ENCODE measurements at regions of chr1 and their contacts with region 1.

Region 1: GRCh38 chr1:245156081-245156735 is 1.4 kb downstream of the KIF26B start:
- DNase-seq: no peak
- H3K4me3 ChIP-seq: peak overlapping the region; percentile 68
- CTCF ChIP-seq: peak; percentile 93

Region 2: DNA sequence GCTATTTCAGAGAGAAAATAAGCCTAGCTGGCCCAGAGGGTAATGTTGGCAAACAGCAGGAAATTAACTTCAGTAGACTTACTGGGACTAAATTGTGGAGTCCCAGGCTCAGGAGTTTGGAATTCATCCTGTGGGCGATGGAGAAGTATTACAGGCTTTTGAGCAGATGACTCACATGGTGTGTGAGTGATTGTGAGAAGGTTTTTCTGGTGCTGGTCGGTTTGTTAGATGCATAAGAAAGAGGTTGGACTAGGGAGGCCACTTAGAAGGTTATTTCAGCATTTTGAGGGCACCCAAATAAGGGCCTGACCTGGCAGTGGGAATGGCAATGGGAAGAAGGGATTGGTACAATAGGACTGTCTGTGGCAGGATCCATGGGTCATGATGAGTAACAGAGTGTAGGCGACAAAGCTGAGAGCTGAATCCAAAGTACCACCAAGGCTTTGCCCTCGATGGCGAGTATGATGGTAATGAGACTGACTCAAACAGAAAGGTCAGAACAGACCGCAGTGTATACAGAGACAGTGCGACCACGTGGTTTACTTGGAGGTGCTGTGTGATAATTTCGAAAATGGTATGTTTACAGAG is 70.6 kb before region 1 on chr1:
- CTCF ChIA-PET with region 1: interaction called, 12 read pairs
- POLR2A ChIA-PET with region 1: no interaction called
- DNase-seq: peak; percentile 92
- H3K4me3 ChIP-seq: no peak overlapping the region
- CTCF ChIP-seq: peak; percentile 17

Region 3: GRCh38 chr1:245142171-245142798 is 13.9 kb before region 1 on chr1:
- CTCF ChIA-PET with region 1: interaction called, 14 read pairs
- POLR2A ChIA-PET with region 1: no interaction called
- DNase-seq: no peak
- H3K4me3 ChIP-seq: no peak overlapping the region
- CTCF ChIP-seq: no peak

Region 4: DNA sequence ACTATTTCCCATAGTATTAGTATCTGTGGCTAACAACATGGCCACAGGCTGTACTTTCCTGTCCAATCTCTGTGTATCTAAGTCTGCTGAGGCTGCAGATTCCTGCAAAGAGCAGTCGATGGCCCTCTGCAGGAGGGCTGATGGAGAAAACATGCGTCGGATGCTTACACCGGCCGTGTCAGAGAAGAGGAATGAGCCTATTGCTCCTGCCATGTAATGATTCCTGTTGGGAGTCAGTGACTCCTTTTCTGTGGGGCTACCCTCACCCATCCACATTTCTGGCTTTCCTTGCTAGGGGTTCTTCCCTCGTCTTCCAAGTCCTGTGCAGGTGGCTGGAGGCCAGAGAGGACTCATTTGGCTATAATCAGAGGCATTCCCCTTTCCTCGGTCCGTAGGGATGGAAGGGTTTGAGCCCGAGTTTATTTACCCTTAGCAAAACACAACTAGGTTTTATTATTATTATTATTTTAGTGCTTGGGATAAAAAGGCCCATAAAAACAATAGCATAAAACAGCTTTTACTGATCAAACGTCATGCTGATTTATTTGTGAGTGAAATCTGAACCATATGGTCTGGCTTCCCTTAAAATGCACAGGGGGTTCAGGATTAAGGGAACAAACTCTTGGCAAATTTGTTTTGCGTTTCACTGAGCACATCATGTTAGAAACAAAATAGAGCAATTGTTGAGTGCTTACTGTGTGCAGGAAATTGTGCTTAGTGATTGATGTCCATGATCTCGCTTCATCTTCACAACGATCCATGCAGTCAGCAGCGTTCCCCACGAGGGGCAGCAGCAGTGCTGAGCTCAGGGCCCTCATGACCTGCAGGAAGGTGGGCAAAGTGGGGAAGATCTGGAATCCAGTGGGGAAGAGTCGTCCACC is 69.4 kb after region 1 on chr1:
- CTCF ChIA-PET with region 1: no interaction called
- POLR2A ChIA-PET with region 1: no interaction called
- DNase-seq: no peak
- H3K4me3 ChIP-seq: no peak overlapping the region
- CTCF ChIP-seq: no peak

Region 5: DNA sequence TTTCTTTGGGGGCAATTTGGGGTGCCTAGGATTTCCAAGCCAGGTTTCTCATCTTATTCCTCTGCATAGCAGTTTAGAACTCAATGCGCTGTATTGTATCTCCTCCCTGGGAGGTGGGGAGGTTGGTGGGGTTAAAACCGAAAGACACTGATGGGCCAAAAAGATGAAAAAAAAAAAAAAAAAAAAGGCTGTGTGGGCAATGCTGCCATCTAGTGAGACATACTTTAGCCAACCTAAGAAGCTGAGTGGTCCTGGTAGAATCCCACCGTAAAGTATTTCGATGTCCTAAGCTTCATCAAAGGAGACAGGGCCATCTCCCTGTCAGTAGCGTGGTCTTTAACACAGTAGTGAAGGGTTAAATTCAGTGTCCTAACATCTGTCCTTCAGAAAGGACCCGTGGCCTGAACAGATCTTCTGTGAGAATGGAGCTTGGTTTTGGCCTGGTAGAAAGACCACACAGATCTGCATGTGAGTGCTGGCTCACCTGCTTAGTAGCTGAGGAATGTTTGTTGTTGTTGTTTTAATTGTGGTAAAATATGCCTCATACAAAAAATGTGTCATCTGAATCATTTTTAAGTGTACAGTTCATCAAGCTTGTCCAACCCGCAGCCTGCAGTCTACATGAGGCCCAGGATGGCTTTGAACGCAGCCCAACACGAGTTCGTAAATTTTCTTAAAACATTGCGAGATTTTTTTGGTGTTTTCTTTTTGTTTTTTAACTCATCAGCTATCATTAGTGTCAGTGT is 224.8 kb after region 1 on chr1:
- CTCF ChIA-PET with region 1: interaction called, 10 read pairs
- POLR2A ChIA-PET with region 1: no interaction called
- DNase-seq: no peak
- H3K4me3 ChIP-seq: no peak overlapping the region
- CTCF ChIP-seq: no peak

Region 6: GRCh38 chr1:245986404-245987220 is 830.4 kb after region 1 on chr1:
- CTCF ChIA-PET with region 1: interaction called, 10 read pairs
- POLR2A ChIA-PET with region 1: no interaction called
- DNase-seq: peak; percentile 61
- H3K4me3 ChIP-seq: no peak overlapping the region
- CTCF ChIP-seq: no peak

Region 7: DNA sequence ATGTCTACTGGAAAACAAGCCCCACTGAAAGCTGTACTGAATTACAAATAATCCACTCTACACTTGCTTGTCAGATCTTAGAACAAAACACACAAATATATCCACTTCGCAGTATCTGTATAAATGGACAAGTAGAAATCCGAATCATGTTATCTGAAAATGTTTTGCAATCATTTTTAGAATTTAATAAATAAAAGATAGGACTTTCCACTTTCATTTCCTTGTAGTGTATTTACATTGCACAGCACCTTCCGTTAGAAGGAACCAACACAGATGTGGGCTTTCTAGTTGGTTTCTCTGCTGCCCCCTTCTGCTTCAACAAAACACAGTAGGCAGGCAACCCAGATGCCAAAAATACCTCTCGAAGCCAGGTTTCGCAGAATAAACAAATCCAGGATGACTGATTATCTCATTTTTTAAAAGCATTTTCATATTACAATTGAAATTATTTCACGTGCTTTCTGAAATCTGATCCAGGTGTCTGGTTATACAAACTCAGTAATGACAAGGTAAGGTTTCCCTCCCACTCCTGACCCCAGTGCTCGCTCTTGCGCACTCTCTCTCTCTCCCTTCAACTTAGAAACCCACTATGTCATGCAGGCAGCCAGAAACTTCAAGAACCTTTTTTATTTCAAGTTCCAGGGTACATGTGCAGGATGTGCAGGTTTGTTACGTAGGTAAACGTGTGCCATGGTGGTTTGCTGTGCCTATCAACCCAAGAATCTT is 961.0 kb after region 1 on chr1:
- CTCF ChIA-PET with region 1: interaction called, 10 read pairs
- POLR2A ChIA-PET with region 1: no interaction called
- DNase-seq: peak; percentile 12
- H3K4me3 ChIP-seq: no peak overlapping the region
- CTCF ChIP-seq: peak; percentile 53

Region 8: GRCh38 chr1:246450611-246451251 is 1294.5 kb after region 1 on chr1:
- CTCF ChIA-PET with region 1: interaction called, 34 read pairs
- POLR2A ChIA-PET with region 1: interaction called, 7 read pairs
- DNase-seq: no peak
- H3K4me3 ChIP-seq: no peak overlapping the region
- CTCF ChIP-seq: peak; percentile 31

Measured in AG04449 (cell line).